ENCODE measurements at regions of chr10 and their contacts with region 1.

Region 1: GRCh38 chr10:125160856-125161706 is 718 bp upstream of the CTBP2 start:
- DNase-seq: peak; percentile 85
- ATAC-seq: peak; percentile 78

Region 2: GRCh38 chr10:124849111-124849773 is 311.8 kb before region 1 on chr10:
- intact Hi-C with region 1: no loop called
- DNase-seq: no peak
- ATAC-seq: peak; percentile 57

Region 3: DNA sequence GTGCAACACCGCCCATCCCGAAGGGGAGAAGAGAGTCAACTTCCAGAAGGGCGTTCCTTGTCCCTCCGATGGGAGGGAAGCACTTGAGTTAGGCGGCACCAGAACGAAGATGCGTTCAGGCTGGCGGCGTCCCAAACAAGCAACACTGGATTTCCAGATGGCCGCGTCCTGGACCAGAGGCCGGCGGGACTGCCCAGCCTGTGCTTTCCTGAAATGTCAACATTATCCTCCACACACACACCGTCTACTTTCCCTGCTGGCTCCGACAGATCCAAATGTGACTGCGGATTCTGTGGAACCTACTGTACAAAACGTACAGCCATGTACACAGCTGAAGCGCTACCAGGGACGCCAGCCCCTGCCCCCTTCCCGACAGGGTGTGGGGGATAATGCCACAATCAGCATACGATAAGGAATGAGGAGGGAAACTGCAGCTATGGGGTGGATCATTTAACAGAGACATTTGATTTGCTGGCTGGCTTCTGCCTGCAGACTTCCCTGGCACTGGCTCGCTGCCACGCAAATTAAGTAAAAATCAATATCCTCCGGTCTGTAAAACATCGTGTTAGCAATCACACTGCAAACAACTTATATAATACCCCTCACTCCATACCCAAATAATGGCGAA is 137.1 kb before region 1 on chr10:
- intact Hi-C with region 1: no loop called
- DNase-seq: peak; percentile 85
- ATAC-seq: peak; percentile 51

Region 4: DNA sequence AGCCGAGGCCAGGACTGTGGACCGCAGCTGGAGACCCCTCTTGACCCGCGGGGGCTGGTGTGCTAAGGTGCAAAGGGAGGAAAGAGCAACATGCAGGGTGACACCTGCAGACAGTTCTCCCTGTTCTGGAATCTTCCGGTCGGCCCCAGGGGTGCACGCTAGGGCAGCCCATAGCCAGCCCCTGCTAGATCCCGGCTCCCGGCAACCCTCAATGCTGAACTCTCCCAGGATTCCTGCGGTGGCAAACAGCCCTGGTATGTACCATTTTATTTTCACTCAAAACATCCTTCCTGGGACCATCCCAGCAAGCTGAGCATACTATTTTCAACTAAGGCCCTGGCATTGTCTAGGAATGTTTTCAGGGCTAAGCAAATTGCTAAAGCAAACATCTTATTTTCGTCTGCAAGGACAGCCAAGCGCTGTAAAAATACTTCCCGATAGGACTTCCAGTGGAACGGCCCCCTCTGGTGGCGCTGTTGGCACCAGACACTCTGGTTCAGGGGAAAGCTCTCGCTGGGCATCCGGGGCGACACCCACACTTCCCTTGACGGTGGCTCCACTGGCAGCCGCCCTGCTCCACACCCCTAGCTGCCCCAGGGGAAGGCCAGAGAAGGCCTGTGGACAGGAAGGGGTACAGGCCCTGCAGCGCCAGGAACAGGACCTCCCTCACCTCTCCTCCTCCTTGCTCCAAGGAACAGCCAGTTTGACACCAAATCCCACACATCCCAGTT is 100.1 kb before region 1 on chr10:
- intact Hi-C with region 1: loop called (anchors 5 kb)
- DNase-seq: peak; percentile 92
- ATAC-seq: peak; percentile 77

Region 5: GRCh38 chr10:125071008-125071407 is 90.1 kb before region 1 on chr10:
- intact Hi-C with region 1: no loop called
- DNase-seq: no peak
- ATAC-seq: no peak

Region 6: DNA sequence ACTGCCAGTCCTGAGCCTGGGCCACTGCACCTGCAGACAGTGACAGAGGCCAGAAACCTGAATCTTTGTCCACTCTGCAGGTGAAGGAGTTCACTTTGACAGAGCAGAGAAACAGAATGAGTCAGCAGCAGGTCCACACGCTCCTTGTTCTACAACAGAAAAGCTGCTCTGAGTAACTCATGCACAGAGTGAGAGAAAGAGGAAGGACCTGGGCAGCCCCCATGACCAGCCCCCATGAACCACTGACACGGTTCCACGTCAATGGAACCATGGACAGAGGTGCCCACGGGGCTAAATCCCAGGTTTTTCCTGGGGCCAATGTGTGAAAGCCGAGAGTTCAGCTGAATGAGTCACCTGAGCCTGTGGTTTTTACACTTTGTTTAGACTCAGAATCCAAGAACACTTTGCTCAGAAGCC is 40.0 kb after region 1 on chr10:
- intact Hi-C with region 1: no loop called
- DNase-seq: no peak
- ATAC-seq: no peak

Region 7: DNA sequence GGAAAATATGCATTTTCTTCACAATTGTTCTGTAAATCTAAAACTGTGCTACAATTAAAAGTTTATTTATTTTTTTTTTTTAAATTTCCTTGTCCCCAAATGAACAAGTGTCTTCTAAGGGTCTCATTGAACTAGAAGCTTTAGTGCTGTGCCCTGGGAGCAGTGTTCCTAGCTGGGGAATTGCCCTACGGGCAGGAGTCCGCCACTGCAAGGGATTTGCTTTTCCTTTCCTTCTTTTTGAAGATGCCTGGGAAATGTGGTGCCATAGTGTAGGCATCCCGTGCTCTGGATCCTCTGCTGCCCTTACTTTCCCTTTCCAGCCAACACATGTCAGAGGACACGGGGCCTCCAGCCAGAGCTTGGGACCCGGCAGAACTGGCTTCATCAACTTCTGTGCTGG is 176.4 kb after region 1 on chr10:
- intact Hi-C with region 1: loop called (anchors 10 kb)
- DNase-seq: no peak
- ATAC-seq: no peak

Measured in Right ventricle myocardium superior (tissue), 1 donor.